Activated CD4-positive, alpha-beta T cell treated with anti-CD3 and anti-CD28 coated beads for 36 hours (primary cell): ENCODE measurements at regions of chr12 and their contacts with region 1.

Region 1: GRCh38 chr12:27305673-27306456 is 26.8 kb upstream of the BMAL2 start:
- DNase-seq: no peak
- ATAC-seq: no peak
- H3K4me3 Mint-ChIP-seq: no peak overlapping the region
- H3K27ac Mint-ChIP-seq: no peak overlapping the region
- H3K4me1 Mint-ChIP-seq: peaks cover 5% of the 10 kb centered on the region
- H3K27me3 Mint-ChIP-seq: no peaks in the 10 kb centered on the region

Region 2: GRCh38 chr12:26853303-26854030 is 452.4 kb before region 1 on chr12:
- CTCF ChIA-PET with region 1: interaction called, 4 read pairs
- POLR2A ChIA-PET with region 1: no interaction called
- intact Hi-C with region 1: loop called (anchors 2 kb)
- DNase-seq: peak; percentile 84
- ATAC-seq: peak; percentile 93
- H3K4me3 Mint-ChIP-seq: no peak overlapping the region
- H3K27ac Mint-ChIP-seq: no peak overlapping the region
- H3K4me1 Mint-ChIP-seq: no peaks in the 10 kb centered on the region
- H3K27me3 Mint-ChIP-seq: peaks cover 1% of the 10 kb centered on the region

Region 3: DNA sequence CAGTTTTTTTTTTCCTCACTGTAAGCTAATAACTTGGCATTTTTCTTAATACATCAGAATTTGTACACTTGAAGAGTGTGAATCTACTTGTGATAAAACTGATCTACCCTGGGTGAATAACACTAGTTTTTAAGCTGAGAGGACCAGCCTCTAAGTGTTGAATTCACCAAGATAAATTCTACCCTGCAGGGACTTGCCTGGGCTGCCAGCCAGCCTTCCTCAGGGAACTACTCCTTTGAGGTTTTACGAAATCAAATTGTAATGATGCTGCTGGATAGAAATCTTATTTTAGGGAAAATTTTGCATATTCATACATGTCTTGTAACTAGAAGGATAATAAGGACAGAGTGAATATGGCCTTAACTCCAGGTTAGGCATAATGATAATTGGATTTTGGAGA is 281.6 kb before region 1 on chr12:
- CTCF ChIA-PET with region 1: interaction called, 152 read pairs
- POLR2A ChIA-PET with region 1: no interaction called
- intact Hi-C with region 1: loop called in 1 of 2 experiments (anchors 2 kb)
- DNase-seq: no peak
- ATAC-seq: no peak
- H3K4me3 Mint-ChIP-seq: peak overlapping the region; percentile 96
- H3K27ac Mint-ChIP-seq: no peak overlapping the region
- H3K4me1 Mint-ChIP-seq: peaks cover 30% of the 10 kb centered on the region
- H3K27me3 Mint-ChIP-seq: peaks cover 4% of the 10 kb centered on the region

Region 4: DNA sequence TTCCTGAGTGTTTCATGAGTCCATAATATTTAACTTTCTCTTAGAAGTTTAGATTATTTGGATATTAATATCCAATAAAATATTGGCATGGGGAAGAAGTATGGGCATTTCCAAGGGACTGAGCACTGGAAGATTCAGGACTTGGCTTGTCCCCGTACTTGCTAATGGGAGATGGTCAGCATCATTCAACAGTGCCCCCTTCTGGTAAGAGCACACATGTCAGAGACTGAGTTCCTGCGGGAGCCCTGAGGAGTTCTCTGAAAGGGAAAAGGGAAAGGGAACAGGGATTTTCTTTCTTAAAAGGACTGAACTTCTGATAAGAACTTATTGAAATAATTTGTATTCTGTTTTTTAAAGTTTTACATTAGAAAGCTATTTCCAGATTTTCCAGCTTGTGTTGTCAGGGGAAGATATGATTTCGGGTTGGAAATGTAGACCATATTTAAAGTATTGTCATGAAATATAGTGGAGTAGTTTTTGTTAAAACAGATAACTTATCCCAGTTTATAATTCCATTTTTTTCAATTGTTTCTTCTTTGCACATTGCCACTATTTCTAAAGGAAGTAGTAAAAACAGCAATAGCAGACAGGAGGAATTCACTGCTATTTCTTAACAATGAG is 163.7 kb before region 1 on chr12:
- CTCF ChIA-PET with region 1: interaction called, 7 read pairs
- POLR2A ChIA-PET with region 1: no interaction called
- intact Hi-C with region 1: loop called (anchors 2 to 10 kb)
- DNase-seq: peak; percentile 63
- ATAC-seq: peak; percentile 70
- H3K4me3 Mint-ChIP-seq: no peak overlapping the region
- H3K27ac Mint-ChIP-seq: no peak overlapping the region
- H3K4me1 Mint-ChIP-seq: peaks cover 12% of the 10 kb centered on the region
- H3K27me3 Mint-ChIP-seq: no peaks in the 10 kb centered on the region

Region 5: DNA sequence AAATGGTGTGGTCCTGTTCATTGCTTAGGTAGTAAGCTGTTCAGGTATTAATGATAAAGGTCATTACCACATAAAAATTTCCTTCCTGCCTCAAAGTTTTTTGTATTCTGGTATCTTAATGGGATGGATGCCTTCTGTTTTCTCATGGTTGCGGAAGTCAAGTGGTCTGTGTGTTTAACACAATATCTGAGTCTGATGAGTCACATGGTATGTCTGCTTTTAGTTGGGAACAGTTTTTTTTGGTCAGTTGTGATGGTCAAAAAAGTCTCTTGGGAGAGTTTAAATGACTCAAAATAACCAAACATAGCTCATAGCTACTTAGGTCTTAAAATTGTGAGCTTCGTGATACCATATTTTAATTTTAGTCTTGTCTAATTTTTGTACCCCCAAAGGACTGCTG is 21.1 kb before region 1 on chr12:
- CTCF ChIA-PET with region 1: interaction called, 27 read pairs
- POLR2A ChIA-PET with region 1: no interaction called
- intact Hi-C with region 1: no loop called
- DNase-seq: no peak
- ATAC-seq: no peak
- H3K4me3 Mint-ChIP-seq: no peak overlapping the region
- H3K27ac Mint-ChIP-seq: no peak overlapping the region
- H3K4me1 Mint-ChIP-seq: peaks cover 11% of the 10 kb centered on the region
- H3K27me3 Mint-ChIP-seq: no peaks in the 10 kb centered on the region

Region 6: GRCh38 chr12:27319848-27320247 is 14.0 kb after region 1 on chr12:
- CTCF ChIA-PET with region 1: interaction called, 15 read pairs
- POLR2A ChIA-PET with region 1: no interaction called
- intact Hi-C with region 1: no loop called
- DNase-seq: no peak
- ATAC-seq: no peak
- H3K4me3 Mint-ChIP-seq: no peak overlapping the region
- H3K27ac Mint-ChIP-seq: no peak overlapping the region
- H3K4me1 Mint-ChIP-seq: no peaks in the 10 kb centered on the region
- H3K27me3 Mint-ChIP-seq: no peaks in the 10 kb centered on the region